HAP-1 (cell line): ENCODE measurements at regions of chr16 and their contacts with region 1.

Region 1: GRCh38 chr16:31713071-31713944 is 160.3 kb upstream of the ZNF267 start:
- DNase-seq: peak; percentile 94 to 97
- H3K4me3 ChIP-seq: peak overlapping the region; percentile 69
- H3K4me1 ChIP-seq: peaks cover 6% of the 10 kb centered on the region
- H3K27me3 ChIP-seq: no peaks in the 10 kb centered on the region

Region 2: GRCh38 chr16:30957456-30958174 is 755.7 kb before region 1 on chr16 and contains the start of gene SETD1A:
- in situ Hi-C with region 1: loop called (anchors 25 kb)
- DNase-seq: peak; percentile 89 to 98
- H3K4me3 ChIP-seq: peak within 1 kb of the TSS; percentile 100
- H3K4me1 ChIP-seq: peaks cover 14% of the 10 kb centered on the region
- H3K27me3 ChIP-seq: no peaks in the 10 kb centered on the region

Region 3: GRCh38 chr16:31038993-31039392 is 674.3 kb before region 1 on chr16:
- in situ Hi-C with region 1: no loop called
- DNase-seq: no peak
- H3K4me3 ChIP-seq: no peak overlapping the region
- H3K4me1 ChIP-seq: peaks cover 3% of the 10 kb centered on the region; the same call in 1 of the 2 replicates
- H3K27me3 ChIP-seq: no peaks in the 10 kb centered on the region

Region 4: DNA sequence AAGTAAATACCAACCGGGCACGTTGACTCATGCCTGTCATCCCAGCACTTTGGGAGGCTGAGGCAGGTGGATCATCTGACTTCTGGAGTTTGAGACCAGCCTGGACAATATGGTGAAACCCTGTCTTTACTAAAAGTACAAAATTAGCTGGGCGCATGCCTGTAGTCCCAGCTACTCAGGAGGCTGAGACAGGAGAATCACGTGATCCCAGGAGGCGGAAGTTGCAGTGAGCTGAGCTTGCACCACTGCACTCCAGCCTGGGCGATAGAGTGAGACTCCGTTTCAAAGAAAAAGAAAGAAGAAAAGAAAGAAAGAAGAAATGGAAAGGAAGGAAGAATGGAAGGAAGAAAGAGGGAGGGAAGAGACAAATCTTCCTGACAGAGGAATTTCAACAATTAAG is 76.9 kb before region 1 on chr16:
- in situ Hi-C with region 1: no loop called
- DNase-seq: no peak
- H3K4me3 ChIP-seq: no peak overlapping the region
- H3K4me1 ChIP-seq: no peaks in the 10 kb centered on the region
- H3K27me3 ChIP-seq: no peaks in the 10 kb centered on the region